ENCODE measurements at regions of chr13 and their contacts with region 1.

Region 1: DNA sequence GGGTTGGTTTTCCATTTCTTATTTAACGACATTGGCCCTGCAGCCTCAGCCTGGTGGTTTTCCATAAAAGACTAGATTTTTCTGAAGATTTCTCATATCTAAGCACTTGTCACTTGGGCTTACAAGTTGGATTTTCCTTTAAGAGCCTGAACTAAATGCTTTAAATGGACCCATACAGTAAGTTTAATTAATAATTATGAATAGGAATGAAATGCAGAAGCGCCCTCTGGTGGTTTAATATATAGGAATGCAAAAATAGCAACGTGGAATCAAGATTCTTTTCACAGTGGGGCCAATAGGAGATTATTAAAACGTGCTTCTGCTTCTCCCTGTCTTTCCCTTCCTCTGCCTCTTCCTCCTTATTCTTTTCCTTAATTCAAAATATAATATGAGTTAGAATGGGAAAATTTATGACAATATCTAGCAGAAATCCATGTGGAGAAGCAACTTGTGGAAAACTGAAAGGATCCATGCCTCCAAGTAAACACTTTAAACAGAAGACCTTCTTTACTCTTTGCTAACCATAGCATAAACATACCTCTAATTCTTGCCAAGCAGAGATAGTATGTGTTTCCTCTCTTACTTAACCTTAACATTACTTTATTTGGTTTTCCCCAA is 324.0 kb downstream of the GPC5 start:
- DNase-seq: peak in 1 of 3 donors; percentile 14
- ATAC-seq: no peak
- H3K4me3 ChIP-seq: no peak overlapping the region
- H3K4me1 ChIP-seq: no peaks in the 10 kb centered on the region
- CTCF ChIP-seq: no peak

Region 2: GRCh38 chr13:91375116-91375729 is 347.2 kb before region 1 on chr13:
- intact Hi-C with region 1: loop called in 1 of 2 experiments (anchors 10 kb)
- DNase-seq: no peak
- ATAC-seq: peak; percentile 60
- H3K4me3 ChIP-seq: no peak overlapping the region
- H3K4me1 ChIP-seq: no peaks in the 10 kb centered on the region
- CTCF ChIP-seq: no peak

Region 3: GRCh38 chr13:91693466-91693865 is 28.9 kb before region 1 on chr13:
- intact Hi-C with region 1: no loop called
- DNase-seq: no peak
- ATAC-seq: no peak
- H3K4me3 ChIP-seq: no peak overlapping the region
- H3K4me1 ChIP-seq: no peaks in the 10 kb centered on the region
- CTCF ChIP-seq: no peak